ENCODE measurements at regions of chr3 and their contacts with region 1.

Region 1: GRCh38 chr3:143016321-143016972 is 15.1 kb downstream of the U2SURP start:
- DNase-seq: no peak
- ATAC-seq: no peak
- H3K4me3 Mint-ChIP-seq: no peak overlapping the region
- H3K27ac Mint-ChIP-seq: no peak overlapping the region
- H3K4me1 Mint-ChIP-seq: peaks cover 25% of the 10 kb centered on the region
- H3K27me3 Mint-ChIP-seq: no peaks in the 10 kb centered on the region

Region 2: GRCh38 chr3:143001369-143002082 is 14.9 kb before region 1 on chr3 and contains the start of gene U2SURP:
- CTCF ChIA-PET with region 1: interaction called, 38 read pairs
- DNase-seq: peak; percentile 97
- ATAC-seq: peak; percentile 90
- H3K4me3 Mint-ChIP-seq: peak within 1 kb of the TSS; percentile 98
- H3K27ac Mint-ChIP-seq: peak within 1 kb of the TSS; percentile 98
- H3K4me1 Mint-ChIP-seq: peaks cover 39% of the 10 kb centered on the region
- H3K27me3 Mint-ChIP-seq: peaks cover 9% of the 10 kb centered on the region
- total RNA-seq, gene U2SURP: 155 to 163 TPM